ENCODE measurements at regions of chr3 and their contacts with region 1.

Region 1: GRCh38 chr3:130892759-130893375 is 1.0 kb upstream of the ATP2C1 start:
- DNase-seq: peak; percentile 82
- H3K4me3 ChIP-seq: peak overlapping the region; percentile 61 to 87 (median 82)
- H3K27ac ChIP-seq: peak overlapping the region; percentile 76
- H3K4me1 ChIP-seq: peaks cover 14% of the 10 kb centered on the region
- H3K27me3 ChIP-seq: no peaks in the 10 kb centered on the region
- CTCF ChIP-seq: peak; percentile 71 to 74
- POLR2A ChIP-seq: peak; percentile 45

Region 2: DNA sequence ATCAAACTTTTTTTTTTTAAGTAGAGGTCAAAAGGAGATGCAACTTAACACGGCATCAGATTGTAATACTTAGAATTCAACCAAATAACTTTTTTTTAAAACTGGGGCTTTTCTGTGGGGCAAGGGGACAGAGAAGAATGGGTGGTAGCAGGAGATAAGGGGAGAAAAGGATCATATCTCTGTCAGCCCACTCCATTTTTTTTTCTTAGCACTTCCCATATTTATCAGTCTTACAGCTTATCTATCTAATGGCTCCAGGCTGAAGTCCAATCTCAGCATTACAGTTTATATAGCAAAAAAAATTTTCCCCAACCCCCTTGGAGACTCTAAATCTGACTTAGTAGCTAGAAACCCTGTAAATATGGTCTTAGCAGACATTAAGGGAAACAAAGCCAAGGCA is 215.5 kb before region 1 on chr3:
- CTCF ChIA-PET with region 1: no interaction called
- POLR2A ChIA-PET with region 1: no interaction called
- dilution Hi-C with region 1: no loop called
- intact Hi-C with region 1: loop called (anchors 1 kb)
- DNase-seq: no peak
- H3K4me3 ChIP-seq: no peak overlapping the region
- H3K27ac ChIP-seq: no peak overlapping the region
- H3K4me1 ChIP-seq: no peaks in the 10 kb centered on the region
- H3K27me3 ChIP-seq: no peaks in the 10 kb centered on the region
- CTCF ChIP-seq: no peak
- POLR2A ChIP-seq: no peak

Region 3: DNA sequence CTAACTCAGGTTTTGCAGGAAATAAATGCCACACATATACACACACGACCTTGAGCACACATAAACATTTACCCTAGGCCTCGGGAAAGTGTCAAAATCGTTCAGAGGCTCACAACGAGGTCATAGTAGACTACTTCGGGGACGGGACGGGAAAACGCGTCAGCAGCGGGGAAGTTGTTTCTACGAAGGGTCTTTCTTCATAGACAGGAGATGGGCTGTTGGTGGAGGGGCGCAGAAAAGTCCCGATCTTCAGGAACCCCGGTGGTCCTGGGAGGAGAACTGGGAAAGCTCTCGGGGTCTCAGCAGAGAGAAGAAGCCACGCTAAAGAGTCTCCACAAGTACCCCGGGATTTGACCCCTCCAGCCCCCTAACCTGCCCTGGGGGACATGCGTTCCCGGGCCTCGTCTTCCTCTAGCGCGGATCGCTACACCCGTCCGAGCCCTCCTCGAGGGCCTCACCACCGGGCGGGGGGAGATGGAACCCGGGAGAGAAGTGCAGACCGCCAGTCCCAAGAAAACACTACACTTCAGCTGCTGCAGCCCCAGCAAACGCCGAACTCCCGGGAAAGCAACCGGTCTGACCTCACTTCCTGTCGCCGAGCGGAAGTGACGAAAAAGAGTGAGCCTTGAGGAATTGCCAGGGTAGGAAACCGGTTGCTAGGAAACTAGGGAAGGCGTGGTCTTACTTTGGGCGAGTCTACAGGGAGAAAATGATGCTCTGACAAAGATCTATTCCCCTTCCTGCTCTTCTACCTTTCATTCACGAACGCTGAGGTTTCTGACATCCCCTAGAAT is 146.4 kb before region 1 on chr3 and contains the start of gene PIK3R4:
- CTCF ChIA-PET with region 1: interaction called, 6 read pairs
- POLR2A ChIA-PET with region 1: no interaction called
- dilution Hi-C with region 1: no loop called
- intact Hi-C with region 1: loop called (anchors 1 kb)
- DNase-seq: peak; percentile 98
- H3K4me3 ChIP-seq: peak within 1 kb of the TSS; percentile 34 to 99 (median 88)
- H3K27ac ChIP-seq: peak within 1 kb of the TSS; percentile 82
- H3K4me1 ChIP-seq: peaks cover 19% of the 10 kb centered on the region
- H3K27me3 ChIP-seq: no peaks in the 10 kb centered on the region
- CTCF ChIP-seq: no peak
- POLR2A ChIP-seq: peak; percentile 85
- total RNA-seq, gene PIK3R4: 23.0 and 26.3 TPM in 2 replicates

Region 4: DNA sequence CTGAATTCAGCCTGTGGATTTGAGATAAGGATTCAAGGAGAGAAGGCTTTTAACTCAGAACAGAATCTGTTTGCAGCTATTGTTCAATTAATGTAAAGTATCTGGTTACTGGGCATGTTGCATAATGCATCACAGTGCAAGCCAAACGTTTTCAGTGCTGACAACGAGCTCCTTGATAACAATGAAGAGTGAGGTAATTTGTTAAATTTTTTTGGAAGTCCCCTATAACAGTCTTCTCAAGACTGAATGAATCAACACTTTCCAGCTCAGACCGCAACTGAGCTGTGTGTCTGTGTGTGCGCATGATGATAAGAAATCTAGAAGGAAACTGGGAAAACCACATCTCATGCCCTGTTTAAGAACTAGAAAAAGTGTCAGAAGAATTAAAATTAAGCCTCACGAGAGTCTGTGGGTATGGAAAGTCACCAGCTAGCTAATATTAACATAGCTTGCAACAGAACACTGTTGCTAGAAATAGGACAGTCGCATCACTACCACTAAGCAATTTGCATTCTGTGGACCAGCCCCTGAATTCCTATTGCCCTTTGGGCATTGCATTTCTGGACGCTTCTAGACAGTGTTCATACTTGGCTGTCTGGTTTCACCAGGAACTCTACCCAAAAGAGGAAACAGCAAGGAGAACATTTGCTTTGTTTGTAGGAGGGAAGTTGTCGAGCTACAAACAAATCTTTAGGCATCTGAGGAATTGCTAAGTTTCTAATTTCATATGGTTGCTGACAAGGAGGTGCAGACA is 42.6 kb before region 1 on chr3:
- CTCF ChIA-PET with region 1: no interaction called
- POLR2A ChIA-PET with region 1: no interaction called
- dilution Hi-C with region 1: no loop called
- intact Hi-C with region 1: no loop called
- DNase-seq: no peak
- H3K4me3 ChIP-seq: no peak overlapping the region
- H3K27ac ChIP-seq: no peak overlapping the region
- H3K4me1 ChIP-seq: no peaks in the 10 kb centered on the region
- H3K27me3 ChIP-seq: peaks cover 4 to 6% of the 10 kb centered on the region in 2 experiments
- CTCF ChIP-seq: no peak
- POLR2A ChIP-seq: no peak

Region 5: GRCh38 chr3:130963878-130964277 is 71.0 kb after region 1 on chr3:
- CTCF ChIA-PET with region 1: no interaction called
- POLR2A ChIA-PET with region 1: no interaction called
- dilution Hi-C with region 1: no loop called
- intact Hi-C with region 1: loop called (anchors 2 kb)
- DNase-seq: peak; percentile 57
- H3K4me3 ChIP-seq: no peak overlapping the region
- H3K27ac ChIP-seq: peak overlapping the region; percentile 68
- H3K4me1 ChIP-seq: peaks cover 21% of the 10 kb centered on the region
- H3K27me3 ChIP-seq: no peaks in the 10 kb centered on the region
- CTCF ChIP-seq: no peak
- POLR2A ChIP-seq: no peak

Region 6: GRCh38 chr3:132029182-132029902 is 1136.5 kb after region 1 on chr3:
- CTCF ChIA-PET with region 1: interaction called, 3 read pairs
- POLR2A ChIA-PET with region 1: no interaction called
- dilution Hi-C with region 1: no loop called
- intact Hi-C with region 1: loop called (anchors 1 kb)
- DNase-seq: peak; percentile 73
- H3K4me3 ChIP-seq: no peak overlapping the region
- H3K27ac ChIP-seq: no peak overlapping the region
- H3K4me1 ChIP-seq: no peaks in the 10 kb centered on the region
- H3K27me3 ChIP-seq: peaks cover 20 to 26% of the 10 kb centered on the region in 2 experiments
- CTCF ChIP-seq: peak; percentile 69 to 94
- POLR2A ChIP-seq: no peak